Right cardiac atrium (tissue), 5 donors: ENCODE measurements at regions of chr19 and their contacts with region 1.

Region 1: DNA sequence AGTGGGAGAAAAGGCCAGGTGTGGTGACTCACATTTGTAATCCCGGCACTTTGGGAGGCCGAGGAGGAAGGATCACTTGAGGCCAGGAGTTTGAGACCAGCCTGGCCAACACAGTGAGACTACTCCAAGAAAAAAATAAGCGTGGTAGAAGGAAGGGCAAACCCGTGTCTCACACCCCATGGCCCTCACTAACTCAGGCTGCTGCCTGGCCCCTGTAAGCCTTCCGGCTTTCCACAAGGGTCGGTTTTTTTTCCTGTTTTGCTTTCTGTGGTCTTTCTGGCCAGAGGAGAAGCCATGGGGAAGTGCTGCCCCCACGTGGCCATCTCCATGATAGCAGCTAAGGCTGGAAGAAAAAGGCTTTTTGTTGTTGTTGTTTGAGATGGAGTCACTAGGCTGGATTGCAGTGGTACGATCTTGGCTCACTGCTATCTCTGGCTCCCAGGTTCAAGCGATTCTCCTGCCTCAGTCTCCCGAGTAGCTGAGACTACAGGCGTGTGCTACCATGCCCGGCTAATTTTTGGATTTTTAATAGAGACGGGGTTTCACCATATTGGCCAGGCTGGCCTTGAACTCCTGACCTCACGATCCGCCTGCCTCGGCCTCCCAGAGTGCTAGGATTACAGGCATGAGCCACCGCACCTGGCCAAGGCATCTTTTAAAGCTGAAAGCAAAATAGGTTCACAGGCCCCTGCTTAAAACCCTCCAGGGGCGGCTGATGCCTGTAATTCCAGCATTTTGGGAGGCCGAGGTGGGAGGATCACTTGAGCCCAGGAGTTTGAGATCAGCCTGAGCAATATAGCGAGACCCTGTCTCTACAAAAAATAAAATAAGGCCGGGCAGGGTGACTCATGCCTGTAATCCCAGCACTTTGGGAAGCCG is 7.5 kb upstream of the ARHGEF18 start:
- DNase-seq: peak; percentile 73 to 92 (median 91)
- ATAC-seq: peak; percentile 65 to 68
- H3K4me3 ChIP-seq: no peak overlapping the region
- H3K27ac ChIP-seq: no peak overlapping the region
- H3K4me1 ChIP-seq: no peaks in the 10 kb centered on the region
- H3K27me3 ChIP-seq: no peaks in the 10 kb centered on the region

Region 2: DNA sequence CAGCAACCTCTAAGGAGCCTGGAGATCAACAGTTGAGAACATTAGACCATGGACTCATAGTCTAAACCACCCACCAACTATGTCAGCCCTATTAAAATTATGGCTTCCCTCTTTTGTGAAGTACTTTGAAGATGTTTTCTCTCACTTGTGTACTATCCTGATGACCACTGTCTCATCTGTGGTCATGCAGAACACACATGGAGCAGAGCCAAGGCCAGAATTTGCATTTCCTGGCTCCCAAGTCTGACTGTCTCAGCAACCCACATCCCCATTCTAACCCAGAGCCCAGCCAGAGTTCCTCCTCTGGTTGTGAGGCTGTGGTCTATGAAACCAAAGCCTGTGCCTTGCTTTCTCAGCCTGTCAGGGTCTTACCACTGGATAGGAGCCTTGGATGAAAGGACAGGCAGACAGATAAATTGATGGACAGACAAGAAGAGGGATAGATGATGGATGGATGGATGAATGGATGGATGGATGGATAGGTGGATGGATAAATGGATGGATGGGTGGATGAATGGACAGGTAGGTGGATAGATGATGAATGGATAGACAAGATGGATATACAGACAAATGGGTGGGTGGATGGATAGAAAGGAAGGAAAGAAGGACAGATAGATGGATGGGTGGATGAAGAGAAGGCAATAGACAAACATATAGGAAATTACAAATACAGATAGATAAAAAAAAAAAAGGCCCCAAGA is 236.3 kb before region 1 on chr19:
- intact Hi-C with region 1: loop called in 3 of 4 experiments (anchors 1 to 2 kb)
- DNase-seq: no peak
- ATAC-seq: peak in 1 of 2 donors; percentile 30
- H3K4me3 ChIP-seq: no peak overlapping the region
- H3K27ac ChIP-seq: no peak overlapping the region
- H3K4me1 ChIP-seq: no peaks in the 10 kb centered on the region
- H3K27me3 ChIP-seq: no peaks in the 10 kb centered on the region

Region 3: GRCh38 chr19:7145494-7146485 is 195.4 kb before region 1 on chr19:
- intact Hi-C with region 1: loop called (anchors 2 to 10 kb)
- DNase-seq: no peak
- ATAC-seq: no peak
- H3K4me3 ChIP-seq: no peak overlapping the region
- H3K27ac ChIP-seq: no peak overlapping the region
- H3K4me1 ChIP-seq: no peaks in the 10 kb centered on the region
- H3K27me3 ChIP-seq: no peaks in the 10 kb centered on the region

Region 4: DNA sequence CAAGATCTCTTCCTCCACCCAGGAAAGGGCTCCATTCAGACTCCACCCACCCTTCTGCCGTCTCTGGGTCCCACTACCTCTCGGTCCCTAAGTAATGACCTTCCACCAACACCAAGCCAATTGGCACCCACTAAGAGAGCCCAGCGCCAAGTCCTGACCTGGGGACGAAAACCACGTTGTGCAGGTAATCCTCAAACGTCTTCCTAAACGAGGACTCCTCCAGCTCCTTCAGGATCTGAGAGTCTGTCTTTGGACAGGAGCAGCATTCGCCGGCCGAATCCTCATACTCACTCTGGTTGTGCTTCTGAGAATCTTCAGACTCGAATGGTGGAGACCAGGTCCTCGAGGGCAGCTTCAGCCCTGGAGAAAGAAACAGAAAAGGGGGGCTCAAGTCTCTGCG is 188.6 kb before region 1 on chr19:
- intact Hi-C with region 1: loop called (anchors 2 to 10 kb)
- DNase-seq: no peak
- ATAC-seq: no peak
- H3K4me3 ChIP-seq: no peak overlapping the region
- H3K27ac ChIP-seq: no peak overlapping the region
- H3K4me1 ChIP-seq: peaks cover 3% of the 10 kb centered on the region
- H3K27me3 ChIP-seq: no peaks in the 10 kb centered on the region